Right cardiac atrium (tissue), 5 donors: ENCODE measurements at regions of chr21 and their contacts with region 1.

Region 1: GRCh38 chr21:41777951-41778874 is 11.4 kb upstream of the RIPK4 start:
- DNase-seq: peak; percentile 90 to 97 (median 95)
- ATAC-seq: peak; percentile 94 to 96
- H3K4me3 ChIP-seq: no peak overlapping the region
- H3K27ac ChIP-seq: no peak overlapping the region
- H3K4me1 ChIP-seq: no peaks in the 10 kb centered on the region
- H3K27me3 ChIP-seq: no peaks in the 10 kb centered on the region

Region 2: DNA sequence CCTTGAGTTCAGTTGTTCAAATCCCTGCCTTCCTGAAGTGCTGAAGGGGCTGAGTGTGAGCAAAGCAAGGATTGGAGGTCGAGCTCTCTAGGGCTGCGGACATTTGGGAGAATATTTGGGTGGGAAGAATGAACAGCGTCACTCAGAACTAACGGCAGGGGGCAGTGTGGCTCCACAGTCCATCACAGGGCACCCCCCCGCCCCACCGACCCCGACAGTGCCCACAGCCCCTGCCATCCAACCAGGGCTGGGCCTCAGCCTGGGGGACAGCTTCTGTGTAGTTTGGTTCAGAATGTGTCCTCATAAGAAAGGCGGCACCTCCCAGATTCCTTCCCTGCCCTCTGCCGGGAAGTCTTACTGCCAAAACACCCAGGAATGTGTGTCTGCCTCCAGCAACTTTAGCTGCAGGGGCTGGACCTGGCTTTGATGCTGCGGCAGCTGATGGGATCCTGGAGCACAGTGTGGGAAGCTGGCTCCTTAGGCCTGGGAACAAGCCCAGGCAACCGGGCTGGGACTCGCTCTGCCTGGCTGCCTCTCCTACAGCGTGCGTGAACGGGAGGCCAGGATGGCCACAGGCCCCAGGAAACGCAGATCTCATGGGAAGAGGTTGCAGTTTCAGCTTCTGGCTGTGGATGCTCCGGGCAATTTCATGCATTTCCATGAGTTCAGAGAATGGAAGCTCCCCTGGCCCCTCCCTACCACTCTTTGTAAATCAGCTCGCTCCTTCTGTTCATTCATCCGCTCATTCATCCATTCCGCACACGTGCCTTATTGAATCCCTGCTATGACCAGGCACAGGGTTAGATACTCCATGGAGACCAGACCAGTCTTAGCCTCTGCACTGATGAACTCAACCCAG is 165.3 kb before region 1 on chr21:
- intact Hi-C with region 1: loop called (anchors 1 to 5 kb)
- DNase-seq: peak; percentile 89 to 93 (median 91)
- ATAC-seq: peak; percentile 90 to 96
- H3K4me3 ChIP-seq: no peak overlapping the region
- H3K27ac ChIP-seq: no peak overlapping the region
- H3K4me1 ChIP-seq: peaks cover 1% of the 10 kb centered on the region
- H3K27me3 ChIP-seq: no peaks in the 10 kb centered on the region

Region 3: DNA sequence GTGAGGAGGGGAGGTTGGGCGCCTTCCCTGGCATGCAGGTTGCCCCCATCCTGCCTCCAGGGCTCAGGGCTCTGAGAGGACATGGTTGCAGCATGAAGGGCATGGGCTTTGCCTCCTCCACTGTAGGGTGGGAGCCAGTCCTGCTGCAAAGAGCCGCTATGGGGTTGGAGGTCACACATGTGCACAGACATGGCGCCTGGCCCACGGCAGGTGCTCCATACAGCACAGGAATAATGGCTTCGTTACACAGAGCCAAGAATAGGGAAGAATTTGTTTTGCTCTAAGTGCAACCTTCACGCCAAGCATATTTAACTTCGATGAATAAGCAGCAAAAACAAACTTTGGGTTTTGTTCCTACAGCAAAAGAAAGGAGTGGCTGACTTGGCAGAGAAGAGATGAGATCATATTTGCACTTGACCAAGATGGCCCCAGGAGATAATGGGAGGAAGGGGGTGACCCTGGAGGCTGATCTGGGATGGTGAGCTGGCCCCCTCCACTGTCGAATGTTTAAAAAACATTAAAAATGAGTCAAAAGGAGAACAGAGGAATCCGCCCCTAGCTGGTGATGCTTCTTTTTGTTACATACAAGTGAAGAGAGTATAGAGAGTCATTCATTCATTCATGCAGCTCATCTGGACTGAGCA is 187.9 kb after region 1 on chr21:
- intact Hi-C with region 1: no loop called
- DNase-seq: no peak
- ATAC-seq: no peak
- H3K4me3 ChIP-seq: no peak overlapping the region
- H3K27ac ChIP-seq: no peak overlapping the region
- H3K4me1 ChIP-seq: no peaks in the 10 kb centered on the region
- H3K27me3 ChIP-seq: no peaks in the 10 kb centered on the region